Naive thymus-derived CD4-positive, alpha-beta T cell (primary cell): ENCODE measurements at regions of chr18 and their contacts with region 1.

Region 1: DNA sequence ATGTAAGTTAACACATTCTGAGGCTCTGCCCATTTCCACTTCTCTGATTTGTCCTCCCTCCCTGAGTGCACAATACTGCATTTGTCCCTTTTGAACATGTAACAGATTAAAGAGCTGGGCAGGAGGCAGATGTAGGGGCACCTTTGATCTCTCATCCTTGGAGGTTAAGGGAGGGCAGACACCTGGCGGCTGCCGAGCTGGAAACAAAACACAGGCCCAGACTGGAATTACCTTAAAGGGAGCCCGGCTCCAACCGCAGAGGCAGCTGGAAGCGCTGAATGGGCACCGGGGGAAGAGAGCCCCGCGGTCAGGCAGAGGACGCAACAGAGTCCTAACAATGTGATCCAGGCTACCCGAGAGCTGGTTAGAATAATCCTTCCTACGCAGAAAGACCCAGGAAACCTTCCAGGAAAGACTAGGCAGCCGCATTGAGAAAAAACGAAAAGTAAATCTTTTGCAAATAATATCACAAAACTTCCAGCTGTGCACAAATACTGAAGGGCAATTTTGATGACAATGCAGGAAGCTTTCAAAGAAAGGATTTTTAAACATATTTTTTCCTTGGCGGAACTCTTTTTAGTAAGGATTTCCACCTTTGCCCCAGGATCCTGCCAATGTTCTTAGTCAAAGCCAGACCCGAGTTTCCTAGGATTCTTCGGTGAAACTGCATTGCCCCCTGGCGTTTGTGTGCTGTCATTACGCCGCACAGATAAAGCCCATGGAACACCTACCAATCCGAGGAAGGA is 216.0 kb downstream of the TGIF1 start:
- DNase-seq: peak; percentile 33 to 78 (median 60)
- ATAC-seq: peak; percentile 84
- H3K4me3 ChIP-seq: no peak overlapping the region
- H3K4me3 Mint-ChIP-seq: peak overlapping the region in 9 of 10 donors; percentile 38 to 62 (median 50)
- H3K27ac ChIP-seq: no peak overlapping the region
- H3K27ac Mint-ChIP-seq: peak overlapping the region in 2 of 9 donors; percentile 31 to 84
- H3K4me1 ChIP-seq: no peaks in the 10 kb centered on the region
- H3K4me1 Mint-ChIP-seq: peaks cover 0 to 26% (median 8%) of the 10 kb centered on the region in 7 donors
- H3K27me3 ChIP-seq: no peaks in the 10 kb centered on the region
- H3K27me3 Mint-ChIP-seq: peaks cover 0 to 5% (median 0%) of the 10 kb centered on the region in 5 donors

Region 2: GRCh38 chr18:2932247-2933181 is 733.4 kb before region 1 on chr18:
- CTCF ChIA-PET with region 1: no interaction called
- POLR2A ChIA-PET with region 1: no interaction called
- intact Hi-C with region 1: loop called in 1 of 2 experiments (anchors 1 kb)
- DNase-seq: peak in 7 of 9 donors; percentile 60 to 79 (median 73)
- ATAC-seq: peak; percentile 84
- H3K4me3 ChIP-seq: no peak overlapping the region
- H3K4me3 Mint-ChIP-seq: peak overlapping the region in 8 of 10 donors; percentile 1 to 30 (median 10)
- H3K27ac ChIP-seq: peak overlapping the region; percentile 49
- H3K27ac Mint-ChIP-seq: peak overlapping the region; percentile 68 to 95 (median 89)
- H3K4me1 ChIP-seq: peaks cover 7 to 8% of the 10 kb centered on the region in 2 donors
- H3K4me1 Mint-ChIP-seq: peaks cover 14 to 49% (median 33%) of the 10 kb centered on the region in 7 donors
- H3K27me3 ChIP-seq: no peaks in the 10 kb centered on the region
- H3K27me3 Mint-ChIP-seq: no peaks in the 10 kb centered on the region

Region 3: DNA sequence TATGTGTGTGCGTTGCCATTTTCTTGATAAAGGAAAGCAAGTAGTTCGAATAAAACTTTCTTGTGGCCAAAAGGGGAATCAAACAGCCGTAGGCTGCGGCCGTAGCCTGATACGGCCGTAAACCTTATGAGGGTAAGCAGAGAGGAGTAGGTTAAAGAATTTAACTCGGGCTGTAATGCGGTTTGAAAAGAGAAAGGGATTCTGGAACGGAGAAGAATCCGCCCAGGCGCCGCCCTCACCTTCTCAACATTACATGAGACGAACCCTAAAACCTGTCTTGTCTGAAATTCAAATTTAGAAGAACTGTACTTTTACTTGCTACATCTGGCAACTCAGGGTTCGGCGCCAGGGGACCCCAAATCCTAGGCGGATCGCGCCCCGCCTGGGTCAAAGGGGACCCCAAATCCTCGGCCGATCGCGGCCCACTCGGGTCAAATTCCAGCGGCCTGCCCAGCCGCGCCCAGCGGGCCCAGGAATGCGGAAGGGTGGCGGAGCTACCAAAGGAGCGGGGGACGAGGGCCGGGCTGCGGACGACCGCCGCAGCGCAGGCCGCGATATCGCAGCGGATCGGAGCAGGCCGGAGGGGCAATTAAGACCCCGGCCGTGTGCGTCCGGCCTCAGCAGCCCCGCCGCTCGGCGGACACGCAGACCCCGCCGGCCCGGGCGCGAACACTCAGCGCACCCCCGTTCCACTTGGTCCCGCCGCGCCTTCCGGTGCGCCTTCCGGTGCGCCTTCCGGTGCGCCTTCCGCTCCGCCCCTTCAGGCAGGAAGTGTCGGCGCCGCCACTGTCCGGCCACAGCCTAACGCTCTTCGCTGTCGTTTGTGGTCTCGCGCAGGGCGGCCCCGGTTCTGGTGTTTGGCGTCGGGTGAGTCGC is 404.3 kb before region 1 on chr18 and contains the start of gene MYL12B:
- CTCF ChIA-PET with region 1: interaction called, 10 read pairs
- POLR2A ChIA-PET with region 1: no interaction called
- intact Hi-C with region 1: no loop called
- DNase-seq: peak; percentile 72 to 88 (median 84)
- ATAC-seq: peak; percentile 87
- H3K4me3 ChIP-seq: peak within 1 kb of the TSS; percentile 81
- H3K4me3 Mint-ChIP-seq: peak within 1 kb of the TSS; percentile 87 to 100 (median 96)
- H3K27ac ChIP-seq: peak within 1 kb of the TSS; percentile 96
- H3K27ac Mint-ChIP-seq: peak within 1 kb of the TSS; percentile 95 to 100 (median 99)
- H3K4me1 ChIP-seq: peaks cover 54 to 66% of the 10 kb centered on the region in 2 donors
- H3K4me1 Mint-ChIP-seq: peaks cover 48 to 87% (median 83%) of the 10 kb centered on the region in 7 donors
- H3K27me3 ChIP-seq: no peaks in the 10 kb centered on the region
- H3K27me3 Mint-ChIP-seq: no peaks in the 10 kb centered on the region
- total RNA-seq, gene MYL12B: 140 to 300 (median 169) TPM

Region 4: GRCh38 chr18:3297025-3297984 is 368.6 kb before region 1 on chr18:
- CTCF ChIA-PET with region 1: interaction called, 37 read pairs
- POLR2A ChIA-PET with region 1: interaction called, 7 read pairs
- intact Hi-C with region 1: loop called (anchors 1 kb)
- DNase-seq: peak; percentile 74 to 93 (median 90)
- ATAC-seq: peak; percentile 100
- H3K4me3 ChIP-seq: peak overlapping the region; percentile 60
- H3K4me3 Mint-ChIP-seq: peak overlapping the region; percentile 89 to 98 (median 95)
- H3K27ac ChIP-seq: peak overlapping the region; percentile 62
- H3K27ac Mint-ChIP-seq: peak overlapping the region; percentile 21 to 93 (median 84)
- H3K4me1 ChIP-seq: peaks cover 6 to 9% of the 10 kb centered on the region in 2 donors
- H3K4me1 Mint-ChIP-seq: peaks cover 0 to 16% (median 10%) of the 10 kb centered on the region in 7 donors
- H3K27me3 ChIP-seq: no peaks in the 10 kb centered on the region
- H3K27me3 Mint-ChIP-seq: peaks cover 13 to 41% (median 30%) of the 10 kb centered on the region in 5 donors

Region 5: DNA sequence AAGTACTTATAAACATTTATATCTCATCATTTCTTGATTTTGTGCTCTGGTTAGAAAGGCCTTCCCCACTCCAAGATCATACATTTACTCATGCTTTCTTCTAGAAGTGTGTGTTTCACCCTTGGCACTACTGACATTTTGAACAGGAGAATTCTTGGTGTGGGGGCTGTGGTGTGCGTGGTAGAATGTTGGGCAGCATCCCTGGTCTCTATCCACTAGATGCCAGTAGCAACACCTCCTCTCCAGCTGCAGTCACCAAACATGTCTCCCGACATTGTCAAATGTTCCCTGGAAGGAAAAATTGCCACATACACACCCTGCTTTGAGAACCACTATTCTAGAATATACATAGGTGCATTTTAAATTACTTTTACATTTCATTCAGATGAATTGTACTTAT is 224.7 kb before region 1 on chr18:
- CTCF ChIA-PET with region 1: interaction called, 12 read pairs
- POLR2A ChIA-PET with region 1: no interaction called
- intact Hi-C with region 1: loop called in 1 of 2 experiments (anchors 1 kb)
- DNase-seq: peak in 5 of 9 donors; percentile 15 to 30 (median 24)
- ATAC-seq: peak; percentile 65
- H3K4me3 ChIP-seq: no peak overlapping the region
- H3K4me3 Mint-ChIP-seq: no peak overlapping the region
- H3K27ac ChIP-seq: no peak overlapping the region
- H3K27ac Mint-ChIP-seq: peak overlapping the region in 1 of 9 donors; percentile 51
- H3K4me1 ChIP-seq: no peaks in the 10 kb centered on the region
- H3K4me1 Mint-ChIP-seq: peaks cover 0 to 6% (median 0%) of the 10 kb centered on the region in 7 donors
- H3K27me3 ChIP-seq: no peaks in the 10 kb centered on the region
- H3K27me3 Mint-ChIP-seq: peaks cover 0 to 26% (median 0%) of the 10 kb centered on the region in 5 donors

Region 6: GRCh38 chr18:3585656-3586509 is 80.1 kb before region 1 on chr18:
- CTCF ChIA-PET with region 1: interaction called, 21 read pairs
- POLR2A ChIA-PET with region 1: interaction called, 3 read pairs
- intact Hi-C with region 1: loop called (anchors 1 kb)
- DNase-seq: peak in 8 of 9 donors; percentile 40 to 60 (median 48)
- ATAC-seq: peak; percentile 90
- H3K4me3 ChIP-seq: no peak overlapping the region
- H3K4me3 Mint-ChIP-seq: peak overlapping the region in 3 of 10 donors; percentile 4 to 34 (median 16)
- H3K27ac ChIP-seq: no peak overlapping the region
- H3K27ac Mint-ChIP-seq: peak overlapping the region in 7 of 9 donors; percentile 28 to 93 (median 65)
- H3K4me1 ChIP-seq: no peaks in the 10 kb centered on the region
- H3K4me1 Mint-ChIP-seq: peaks cover 0 to 29% (median 11%) of the 10 kb centered on the region in 7 donors
- H3K27me3 ChIP-seq: no peaks in the 10 kb centered on the region
- H3K27me3 Mint-ChIP-seq: no peaks in the 10 kb centered on the region

Region 7: DNA sequence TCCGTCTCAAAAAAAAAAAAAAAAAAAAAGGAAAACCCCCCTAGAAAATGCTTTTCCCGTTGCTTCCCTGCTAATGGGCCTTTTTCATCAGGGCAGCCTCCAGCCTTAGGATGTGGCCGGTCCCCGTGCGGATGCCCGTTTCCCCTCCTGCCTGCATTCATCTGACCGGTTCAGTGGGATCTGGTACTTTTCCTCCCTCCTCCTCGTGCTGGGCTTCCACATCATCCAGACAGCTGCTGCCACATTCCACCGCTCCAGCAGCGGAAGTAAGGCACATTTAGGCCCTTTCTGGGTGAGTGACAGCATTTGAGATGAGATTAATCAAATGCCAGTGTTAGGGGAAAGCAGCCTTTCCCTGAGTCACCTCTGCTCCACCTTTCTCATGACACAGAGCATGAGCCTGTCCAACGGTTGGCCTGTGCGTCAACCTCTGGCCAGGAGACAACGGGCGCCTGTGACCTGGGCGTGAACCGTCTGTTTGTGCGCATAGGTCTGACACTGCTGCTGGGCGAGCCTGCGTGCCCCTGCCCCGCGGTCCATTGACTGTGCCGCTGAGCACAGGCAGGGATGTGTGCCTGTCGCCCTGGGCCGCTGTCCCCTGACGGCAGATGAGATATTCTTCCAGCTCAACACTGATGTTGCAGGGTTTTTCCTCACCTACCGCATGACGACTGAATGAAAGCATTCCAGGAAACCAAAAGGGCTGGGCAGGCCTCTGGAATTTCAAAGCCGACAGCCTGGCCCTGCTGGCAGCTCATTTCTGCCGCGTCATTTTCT is 42.0 kb before region 1 on chr18:
- CTCF ChIA-PET with region 1: interaction called, 4 read pairs
- POLR2A ChIA-PET with region 1: no interaction called
- intact Hi-C with region 1: loop called in 1 of 2 experiments (anchors 2 kb)
- DNase-seq: no peak
- ATAC-seq: no peak
- H3K4me3 ChIP-seq: no peak overlapping the region
- H3K4me3 Mint-ChIP-seq: peak overlapping the region in 1 of 10 donors; percentile 67
- H3K27ac ChIP-seq: no peak overlapping the region
- H3K27ac Mint-ChIP-seq: peak overlapping the region in 2 of 9 donors; percentile 32 to 77
- H3K4me1 ChIP-seq: peaks cover 9 to 12% of the 10 kb centered on the region in 2 donors
- H3K4me1 Mint-ChIP-seq: peaks cover 7 to 44% (median 14%) of the 10 kb centered on the region in 7 donors
- H3K27me3 ChIP-seq: no peaks in the 10 kb centered on the region
- H3K27me3 Mint-ChIP-seq: no peaks in the 10 kb centered on the region

Region 8: DNA sequence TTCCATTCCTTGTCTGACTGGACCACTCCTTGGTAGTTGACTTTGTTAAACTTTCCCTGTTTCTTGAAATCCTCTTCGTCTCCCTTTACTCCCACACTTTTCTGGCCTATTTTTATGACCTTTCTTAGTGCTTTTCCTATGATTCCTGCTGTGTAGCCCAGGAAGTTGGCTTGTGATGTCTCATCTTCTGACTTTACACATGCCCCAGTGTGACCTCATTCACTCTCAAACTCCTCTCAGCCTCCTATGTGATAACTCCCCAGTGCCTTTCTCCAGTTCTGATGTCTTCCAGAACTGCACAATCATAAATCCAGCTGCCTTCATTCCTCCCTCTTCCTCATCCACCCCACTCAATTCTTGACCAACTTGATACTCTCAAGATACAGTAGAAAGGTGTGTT is 191.6 kb after region 1 on chr18:
- CTCF ChIA-PET with region 1: no interaction called
- POLR2A ChIA-PET with region 1: no interaction called
- intact Hi-C with region 1: no loop called
- DNase-seq: no peak
- ATAC-seq: no peak
- H3K4me3 ChIP-seq: no peak overlapping the region
- H3K4me3 Mint-ChIP-seq: no peak overlapping the region
- H3K27ac ChIP-seq: no peak overlapping the region
- H3K27ac Mint-ChIP-seq: no peak overlapping the region
- H3K4me1 ChIP-seq: no peaks in the 10 kb centered on the region
- H3K4me1 Mint-ChIP-seq: no peaks in the 10 kb centered on the region
- H3K27me3 ChIP-seq: no peaks in the 10 kb centered on the region
- H3K27me3 Mint-ChIP-seq: peaks cover 0 to 30% (median 10%) of the 10 kb centered on the region in 5 donors